ENCODE measurements at regions of chr12 and their contacts with region 1.

Region 1: GRCh38 chr12:14567351-14568162 is at the start of gene PLBD1:
- DNase-seq: peak; percentile 90
- total RNA-seq, gene PLBD1: 33.8 TPM

Region 2: DNA sequence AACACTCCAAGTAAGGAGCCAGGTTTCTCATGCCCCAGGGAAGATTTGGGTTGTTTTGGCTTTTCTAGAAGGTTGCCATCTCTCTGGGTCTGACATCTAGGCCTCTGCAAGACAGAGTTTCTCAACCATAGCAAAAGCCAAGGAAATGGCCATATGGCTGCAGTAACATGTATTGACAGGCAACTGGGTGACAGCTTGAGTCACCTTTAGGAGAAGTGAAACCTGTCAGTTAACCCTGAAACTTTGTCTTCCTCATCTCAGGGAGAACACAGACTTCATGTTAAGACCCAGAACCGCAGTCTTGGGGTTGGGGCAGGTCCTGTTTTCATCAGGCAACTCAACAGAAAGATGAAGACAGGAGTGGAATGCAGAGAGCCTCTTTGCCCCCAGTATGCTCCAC is 46.2 kb after region 1 on chr12:
- intact Hi-C with region 1: loop called (anchors 5 kb)
- DNase-seq: no peak